WTC11 (cell line): ENCODE measurements at regions of chr11 and their contacts with region 1.

Region 1: GRCh38 chr11:62542750-62543567 is 3.6 kb downstream of the AHNAK start:
- DNase-seq: peak; percentile 90
- ATAC-seq: peak; percentile 51
- H3K4me3 Mint-ChIP-seq: peak overlapping the region; percentile 52
- H3K27ac Mint-ChIP-seq: no peak overlapping the region
- H3K4me1 Mint-ChIP-seq: peaks cover 46% of the 10 kb centered on the region
- H3K27me3 Mint-ChIP-seq: peaks cover 65% of the 10 kb centered on the region
- CTCF ChIP-seq: peak; percentile 99

Region 2: DNA sequence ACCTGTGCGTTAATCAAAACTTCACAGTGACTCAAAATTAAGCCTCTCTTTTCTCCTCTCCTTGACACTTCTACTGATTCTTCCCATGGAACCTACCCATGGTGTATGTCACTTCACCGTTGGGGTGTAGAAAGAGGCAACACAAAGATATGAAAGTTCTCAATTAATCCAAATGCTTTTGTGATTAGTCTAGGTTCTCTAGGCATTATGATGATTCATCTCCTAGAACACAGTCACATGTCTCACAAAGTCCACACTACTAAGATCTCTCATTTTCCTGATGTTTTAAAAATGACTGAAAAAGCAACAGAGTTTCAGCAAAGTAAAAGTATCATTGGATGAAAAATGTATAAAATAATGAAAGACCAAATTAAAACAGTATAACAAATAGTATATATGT is 286.7 kb before region 1 on chr11:
- CTCF ChIA-PET with region 1: no interaction called
- POLR2A ChIA-PET with region 1: no interaction called
- DNase-seq: no peak
- ATAC-seq: no peak
- H3K4me3 Mint-ChIP-seq: no peak overlapping the region
- H3K27ac Mint-ChIP-seq: no peak overlapping the region
- H3K4me1 Mint-ChIP-seq: peaks cover 5% of the 10 kb centered on the region; the same call in 1 of the 2 replicates
- H3K27me3 Mint-ChIP-seq: peaks cover 20% of the 10 kb centered on the region
- CTCF ChIP-seq: no peak

Region 3: GRCh38 chr11:62406034-62406433 is 136.9 kb before region 1 on chr11:
- CTCF ChIA-PET with region 1: interaction called, 37 read pairs
- POLR2A ChIA-PET with region 1: no interaction called
- DNase-seq: no peak
- ATAC-seq: no peak
- H3K4me3 Mint-ChIP-seq: no peak overlapping the region
- H3K27ac Mint-ChIP-seq: no peak overlapping the region
- H3K4me1 Mint-ChIP-seq: peaks cover 10% of the 10 kb centered on the region; the same call in 1 of the 2 replicates
- H3K27me3 Mint-ChIP-seq: peaks cover 3% of the 10 kb centered on the region; the same call in 1 of the 2 replicates
- CTCF ChIP-seq: no peak

Region 4: GRCh38 chr11:62444236-62444833 is 98.6 kb before region 1 on chr11:
- CTCF ChIA-PET with region 1: interaction called, 35 read pairs
- POLR2A ChIA-PET with region 1: no interaction called
- DNase-seq: peak; percentile 41
- ATAC-seq: peak; percentile 65
- H3K4me3 Mint-ChIP-seq: peak overlapping the region; percentile 28
- H3K27ac Mint-ChIP-seq: peak overlapping the region; percentile 67; the same call in 1 of the 2 replicates
- H3K4me1 Mint-ChIP-seq: peaks cover 14% of the 10 kb centered on the region
- H3K27me3 Mint-ChIP-seq: no peaks in the 10 kb centered on the region
- CTCF ChIP-seq: no peak

Region 5: DNA sequence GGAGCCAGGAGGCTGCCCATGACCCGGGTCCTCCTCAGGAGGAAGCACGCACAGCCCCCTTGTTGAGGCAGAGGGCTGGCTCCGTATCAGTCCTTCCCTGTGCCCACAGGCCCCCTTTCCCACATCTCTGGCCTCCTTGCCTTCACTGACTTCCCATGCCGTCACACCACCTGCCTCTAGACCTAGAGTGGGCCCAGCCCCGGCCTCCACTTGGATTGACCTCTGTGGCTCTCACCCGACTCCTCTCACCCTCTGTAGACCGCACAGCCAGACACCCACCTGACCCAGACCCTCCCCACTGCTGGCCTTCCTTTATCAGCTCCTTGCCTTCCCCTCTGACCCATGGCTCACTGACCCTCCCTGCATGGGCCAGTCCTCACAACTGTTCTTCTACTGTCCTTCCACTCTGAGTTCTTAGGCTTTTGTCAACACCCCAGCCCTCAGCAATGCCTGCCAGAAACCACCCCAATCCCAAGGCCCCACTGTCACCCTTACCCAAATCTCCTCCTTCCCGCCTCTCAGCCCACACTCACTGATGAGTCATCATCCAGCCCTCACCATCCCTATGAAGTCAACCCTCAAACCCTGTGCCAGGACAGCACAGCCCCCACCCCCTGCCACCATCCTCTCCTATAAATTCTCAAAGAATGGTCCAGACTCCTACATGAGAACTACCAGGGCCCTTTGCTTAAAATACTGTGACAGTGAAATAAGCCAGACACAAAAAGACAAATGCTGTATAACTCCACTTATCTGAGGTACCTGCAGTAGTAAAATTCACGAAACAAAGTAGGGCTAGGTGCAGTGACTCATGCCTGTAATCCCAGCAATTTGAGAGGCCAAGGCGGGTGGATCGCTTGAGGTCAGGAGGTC is 70.7 kb before region 1 on chr11:
- CTCF ChIA-PET with region 1: interaction called, 24 read pairs
- POLR2A ChIA-PET with region 1: no interaction called
- DNase-seq: no peak
- ATAC-seq: no peak
- H3K4me3 Mint-ChIP-seq: no peak overlapping the region
- H3K27ac Mint-ChIP-seq: peak overlapping the region; percentile 56; the same call in 1 of the 2 replicates
- H3K4me1 Mint-ChIP-seq: no peaks in the 10 kb centered on the region
- H3K27me3 Mint-ChIP-seq: no peaks in the 10 kb centered on the region; the same call in 1 of the 2 replicates
- CTCF ChIP-seq: no peak

Region 6: GRCh38 chr11:62497132-62497915 is 45.6 kb before region 1 on chr11:
- CTCF ChIA-PET with region 1: interaction called, 177 read pairs
- POLR2A ChIA-PET with region 1: no interaction called
- DNase-seq: peak; percentile 43
- ATAC-seq: peak; percentile 75
- H3K4me3 Mint-ChIP-seq: no peak overlapping the region
- H3K27ac Mint-ChIP-seq: peak overlapping the region; percentile 19; the same call in 1 of the 2 replicates
- H3K4me1 Mint-ChIP-seq: peaks cover 26% of the 10 kb centered on the region
- H3K27me3 Mint-ChIP-seq: peaks cover 11% of the 10 kb centered on the region
- CTCF ChIP-seq: no peak

Region 7: DNA sequence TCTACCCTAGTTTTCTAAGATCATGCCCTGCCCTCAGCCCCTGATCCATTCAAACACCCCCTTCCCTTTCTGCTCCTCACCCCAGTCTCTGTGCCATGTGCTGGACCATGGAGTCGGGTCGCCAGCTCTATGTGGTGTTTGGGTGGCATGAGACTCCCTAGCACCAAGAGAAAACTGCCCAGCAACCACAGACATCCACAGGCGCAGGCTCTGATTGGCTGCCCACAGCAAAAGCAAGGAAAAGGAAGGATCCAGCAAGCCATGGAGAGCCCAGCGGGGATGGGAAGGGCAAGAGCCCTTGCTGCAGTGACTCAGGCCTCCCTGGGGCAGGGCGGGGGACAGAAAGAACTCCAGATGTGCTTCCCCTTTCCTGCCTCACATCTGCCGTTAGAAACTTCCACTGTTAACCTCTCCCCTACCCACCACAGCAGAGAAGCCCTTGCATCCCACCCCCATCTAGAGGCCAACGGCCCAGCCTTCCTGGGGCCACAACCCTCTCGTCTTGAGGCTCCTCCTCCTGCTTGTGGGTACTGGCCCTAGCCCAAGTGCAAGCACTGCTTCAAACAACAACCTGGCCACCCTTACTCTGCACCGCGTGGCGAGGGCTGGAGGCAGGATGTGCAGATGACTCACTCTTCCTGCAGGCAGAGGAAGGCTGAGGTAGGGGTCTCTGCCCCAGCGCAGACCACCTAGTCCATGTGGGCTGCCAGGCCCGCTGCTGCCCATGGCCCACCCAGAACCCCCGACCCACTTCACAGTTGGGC is 13.3 kb after region 1 on chr11:
- CTCF ChIA-PET with region 1: interaction called, 311 read pairs
- POLR2A ChIA-PET with region 1: interaction called, 18 read pairs
- DNase-seq: peak; percentile 82
- ATAC-seq: peak; percentile 33
- H3K4me3 Mint-ChIP-seq: no peak overlapping the region; the same call in 1 of the 2 replicates
- H3K27ac Mint-ChIP-seq: peak overlapping the region; percentile 97
- H3K4me1 Mint-ChIP-seq: peaks cover 85% of the 10 kb centered on the region
- H3K27me3 Mint-ChIP-seq: no peaks in the 10 kb centered on the region; the same call in 1 of the 2 replicates
- CTCF ChIP-seq: no peak

Region 8: DNA sequence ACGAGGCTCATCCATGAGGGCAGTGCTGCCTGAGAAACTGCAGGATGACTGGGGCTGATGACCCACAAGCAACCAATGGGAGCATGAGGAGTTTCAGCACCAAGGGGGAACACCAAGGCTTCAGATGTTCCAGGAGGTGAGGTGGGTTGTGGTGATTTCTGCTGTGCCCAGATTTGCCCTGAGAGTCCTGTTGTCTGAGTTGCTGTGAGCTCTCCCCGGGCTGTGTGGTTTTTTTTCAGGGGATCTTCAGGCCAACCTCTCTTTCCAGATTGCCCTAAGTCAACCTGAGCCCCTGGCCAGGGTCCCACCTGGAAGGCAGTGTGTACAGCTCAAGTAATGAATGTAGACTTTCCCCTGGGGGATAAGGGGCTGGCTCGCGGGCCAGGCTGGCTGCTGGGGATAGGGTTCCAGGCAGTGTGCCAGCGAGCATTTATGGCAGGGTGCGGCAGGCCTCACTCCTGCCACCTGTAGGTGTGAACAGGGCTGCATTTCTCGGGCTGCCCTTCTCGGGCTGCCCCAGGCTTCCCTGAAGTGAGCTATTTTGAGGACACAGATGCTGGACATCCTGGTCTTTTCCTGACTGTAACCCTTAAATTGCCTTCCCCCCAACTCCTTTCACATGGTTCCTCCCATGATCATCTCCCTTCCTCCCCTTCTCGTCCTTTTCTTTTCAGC is 432.0 kb after region 1 on chr11:
- CTCF ChIA-PET with region 1: no interaction called
- POLR2A ChIA-PET with region 1: no interaction called
- DNase-seq: peak; percentile 71
- ATAC-seq: peak; percentile 98
- H3K4me3 Mint-ChIP-seq: no peak overlapping the region
- H3K27ac Mint-ChIP-seq: no peak overlapping the region
- H3K4me1 Mint-ChIP-seq: peaks cover 3% of the 10 kb centered on the region; the same call in 1 of the 2 replicates
- H3K27me3 Mint-ChIP-seq: peaks cover 17% of the 10 kb centered on the region
- CTCF ChIP-seq: no peak

Region 9: GRCh38 chr11:62999649-63000048 is 456.7 kb after region 1 on chr11:
- CTCF ChIA-PET with region 1: no interaction called
- POLR2A ChIA-PET with region 1: no interaction called
- DNase-seq: no peak
- ATAC-seq: peak; percentile 37; the same call in 1 of the 2 replicates
- H3K4me3 Mint-ChIP-seq: no peak overlapping the region
- H3K27ac Mint-ChIP-seq: no peak overlapping the region
- H3K4me1 Mint-ChIP-seq: peaks cover 10% of the 10 kb centered on the region
- H3K27me3 Mint-ChIP-seq: no peaks in the 10 kb centered on the region; the same call in 1 of the 2 replicates
- CTCF ChIP-seq: no peak